ENCODE measurements at regions of chr1 and their contacts with region 1.

Region 1: GRCh38 chr1:167936068-167936929 is at the start of gene DCAF6:
- DNase-seq: peak; percentile 98
- H3K4me3 Mint-ChIP-seq: peak within 1 kb of the TSS; percentile 91
- H3K27ac Mint-ChIP-seq: peak within 1 kb of the TSS; percentile 100
- H3K4me1 Mint-ChIP-seq: peaks cover 35% of the 10 kb centered on the region
- H3K27me3 Mint-ChIP-seq: no peaks in the 10 kb centered on the region
- total RNA-seq, gene DCAF6: 21.2 to 25.0 TPM

Region 2: DNA sequence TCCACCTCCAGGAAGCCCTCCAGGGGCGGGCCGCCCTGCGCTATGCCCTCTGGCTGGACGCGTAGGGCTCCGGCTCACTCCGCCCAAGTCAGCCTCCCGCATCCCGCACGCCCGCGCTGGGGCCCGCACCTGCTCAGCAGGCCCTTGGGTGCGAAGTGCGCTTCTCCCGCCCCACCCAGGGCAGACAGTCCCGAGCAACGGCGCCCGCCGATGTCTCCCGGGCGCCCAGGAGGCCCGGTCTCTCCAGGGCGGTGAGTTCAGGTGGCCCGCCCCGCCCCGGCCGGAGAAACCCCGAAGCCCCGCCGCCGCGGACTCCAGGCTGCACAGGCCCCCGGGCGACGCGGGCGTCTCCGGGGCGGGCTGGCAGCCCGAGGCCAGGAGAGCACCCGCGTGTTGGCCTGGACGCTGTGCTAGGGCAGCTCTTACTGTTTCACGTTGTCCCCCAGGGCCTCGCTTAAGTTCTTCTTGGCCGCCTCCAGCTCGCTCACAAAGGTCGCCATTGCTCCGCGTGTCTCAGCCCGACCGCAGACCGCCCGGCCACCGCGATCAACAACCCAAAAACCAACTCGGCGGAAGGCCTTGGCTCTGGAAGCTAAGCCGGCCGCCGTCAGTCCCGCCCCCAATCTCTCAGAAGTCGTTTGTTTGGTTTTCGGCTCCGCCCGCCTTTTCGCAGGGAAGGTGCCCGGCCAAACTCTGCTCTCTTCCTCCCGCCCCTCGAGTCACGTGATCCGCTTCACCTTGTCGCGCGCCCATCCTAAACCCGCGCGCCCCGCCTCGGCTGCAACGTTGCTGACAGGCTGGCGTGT is 1060.4 kb before region 1 on chr1 and contains the start of gene TADA1:
- CTCF ChIA-PET with region 1: no interaction called
- POLR2A ChIA-PET with region 1: no interaction called
- intact Hi-C with region 1: loop called (anchors 5 kb)
- DNase-seq: peak; percentile 100
- H3K4me3 Mint-ChIP-seq: peak within 1 kb of the TSS; percentile 96
- H3K27ac Mint-ChIP-seq: peak within 1 kb of the TSS; percentile 97
- H3K4me1 Mint-ChIP-seq: peaks cover 47% of the 10 kb centered on the region
- H3K27me3 Mint-ChIP-seq: no peaks in the 10 kb centered on the region
- total RNA-seq, gene TADA1: 16.9 to 18.3 TPM

Region 3: GRCh38 chr1:167715157-167715999 is 220.9 kb before region 1 on chr1:
- CTCF ChIA-PET with region 1: interaction called, 3 read pairs
- POLR2A ChIA-PET with region 1: interaction called, 4 read pairs
- intact Hi-C with region 1: loop called (anchors 1 kb)
- DNase-seq: peak; percentile 93
- H3K4me3 Mint-ChIP-seq: peak overlapping the region; percentile 80
- H3K27ac Mint-ChIP-seq: peak overlapping the region; percentile 93
- H3K4me1 Mint-ChIP-seq: peaks cover 35% of the 10 kb centered on the region
- H3K27me3 Mint-ChIP-seq: peaks cover 7% of the 10 kb centered on the region

Region 4: GRCh38 chr1:167987174-167987573 is 50.9 kb after region 1 on chr1:
- CTCF ChIA-PET with region 1: no interaction called
- POLR2A ChIA-PET with region 1: no interaction called
- intact Hi-C with region 1: loop called (anchors 1 kb)
- DNase-seq: no peak
- H3K4me3 Mint-ChIP-seq: no peak overlapping the region
- H3K27ac Mint-ChIP-seq: no peak overlapping the region
- H3K4me1 Mint-ChIP-seq: peaks cover 2% of the 10 kb centered on the region
- H3K27me3 Mint-ChIP-seq: no peaks in the 10 kb centered on the region

Region 5: GRCh38 chr1:168138134-168138533 is 201.8 kb after region 1 on chr1:
- CTCF ChIA-PET with region 1: no interaction called
- POLR2A ChIA-PET with region 1: no interaction called
- intact Hi-C with region 1: loop called (anchors 2 kb)
- DNase-seq: no peak
- H3K4me3 Mint-ChIP-seq: no peak overlapping the region
- H3K27ac Mint-ChIP-seq: peak overlapping the region; percentile 14
- H3K4me1 Mint-ChIP-seq: peaks cover 43% of the 10 kb centered on the region
- H3K27me3 Mint-ChIP-seq: peaks cover 27% of the 10 kb centered on the region

Region 6: GRCh38 chr1:168234846-168235547 is 298.7 kb after region 1 on chr1:
- CTCF ChIA-PET with region 1: interaction called, 3 read pairs
- POLR2A ChIA-PET with region 1: interaction called, 3 read pairs
- intact Hi-C with region 1: loop called (anchors 5 kb)
- DNase-seq: peak; percentile 63
- H3K4me3 Mint-ChIP-seq: no peak overlapping the region
- H3K27ac Mint-ChIP-seq: peak overlapping the region; percentile 79
- H3K4me1 Mint-ChIP-seq: peaks cover 61% of the 10 kb centered on the region
- H3K27me3 Mint-ChIP-seq: no peaks in the 10 kb centered on the region